ENCODE measurements at regions of chr20 and their contacts with region 1.

Region 1: DNA sequence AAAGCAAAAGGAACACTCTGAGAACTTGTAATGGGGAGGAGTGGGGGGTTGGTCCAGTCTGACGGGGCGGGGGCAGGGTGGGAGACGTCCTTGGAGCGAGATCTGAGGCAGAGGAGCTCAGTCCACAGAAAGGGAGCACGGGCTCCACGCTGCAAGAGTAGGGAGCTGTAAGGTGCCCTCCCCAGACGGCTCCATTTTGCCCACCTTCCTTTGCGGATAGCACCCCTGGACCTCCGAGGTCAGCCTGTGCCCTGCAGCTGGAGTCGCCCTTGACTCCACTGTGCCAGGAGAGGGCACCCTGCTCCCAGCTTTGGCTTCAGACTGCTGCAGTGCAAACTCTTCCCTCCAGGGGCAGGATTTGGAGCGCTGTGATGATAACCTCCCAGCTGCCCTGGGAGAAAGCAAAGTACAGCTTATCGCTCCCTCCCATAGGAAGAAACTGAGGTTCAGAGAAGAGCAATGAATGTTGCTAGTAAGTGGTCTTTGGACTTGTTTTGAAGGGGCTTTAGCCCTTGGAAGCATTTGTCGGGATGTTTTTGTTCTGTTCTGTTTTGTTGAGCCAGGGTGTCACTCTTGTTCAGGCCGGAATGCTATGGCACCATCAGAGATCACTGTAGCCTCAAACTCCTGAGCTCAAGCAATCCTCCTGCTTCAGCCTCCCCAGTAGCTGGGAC is 9.5 kb upstream of the AHCY start:
- DNase-seq: peak; percentile 88
- CTCF ChIP-seq: peak; percentile 100

Region 2: GRCh38 chr20:34089655-34090345 is 222.9 kb before region 1 on chr20:
- CTCF ChIA-PET with region 1: no interaction called
- POLR2A ChIA-PET with region 1: no interaction called
- DNase-seq: no peak
- CTCF ChIP-seq: no peak

Region 3: DNA sequence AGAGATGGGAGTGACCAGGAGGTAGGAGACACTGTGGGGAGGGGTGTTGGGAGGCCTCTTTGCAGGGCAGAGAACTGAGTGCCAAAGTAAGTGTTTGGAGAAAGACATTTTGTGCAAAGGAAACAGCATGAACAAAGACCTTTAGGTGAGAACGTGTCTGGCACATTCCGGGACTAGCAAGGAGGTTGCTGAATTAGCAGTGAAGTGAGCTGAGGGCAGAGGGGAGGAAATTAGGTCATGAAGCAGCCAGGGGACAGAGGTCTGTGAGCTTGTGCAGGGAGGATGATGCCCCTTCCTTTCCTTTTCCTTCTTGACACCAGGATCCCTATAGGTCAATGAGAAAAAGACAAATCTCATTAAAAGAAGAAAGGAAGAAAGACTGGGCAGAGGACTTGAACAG is 11.9 kb after region 1 on chr20:
- CTCF ChIA-PET with region 1: interaction called, 36 read pairs
- POLR2A ChIA-PET with region 1: no interaction called
- DNase-seq: no peak
- CTCF ChIP-seq: no peak

Region 4: GRCh38 chr20:34437330-34437986 is 124.8 kb after region 1 on chr20:
- CTCF ChIA-PET with region 1: interaction called, 12 read pairs
- POLR2A ChIA-PET with region 1: no interaction called
- DNase-seq: no peak
- CTCF ChIP-seq: no peak

Region 5: GRCh38 chr20:34516247-34517113 is 203.8 kb after region 1 on chr20 and contains the start of gene DYNLRB1:
- CTCF ChIA-PET with region 1: interaction called, 81 read pairs
- POLR2A ChIA-PET with region 1: no interaction called
- DNase-seq: peak; percentile 92
- CTCF ChIP-seq: no peak

Region 6: DNA sequence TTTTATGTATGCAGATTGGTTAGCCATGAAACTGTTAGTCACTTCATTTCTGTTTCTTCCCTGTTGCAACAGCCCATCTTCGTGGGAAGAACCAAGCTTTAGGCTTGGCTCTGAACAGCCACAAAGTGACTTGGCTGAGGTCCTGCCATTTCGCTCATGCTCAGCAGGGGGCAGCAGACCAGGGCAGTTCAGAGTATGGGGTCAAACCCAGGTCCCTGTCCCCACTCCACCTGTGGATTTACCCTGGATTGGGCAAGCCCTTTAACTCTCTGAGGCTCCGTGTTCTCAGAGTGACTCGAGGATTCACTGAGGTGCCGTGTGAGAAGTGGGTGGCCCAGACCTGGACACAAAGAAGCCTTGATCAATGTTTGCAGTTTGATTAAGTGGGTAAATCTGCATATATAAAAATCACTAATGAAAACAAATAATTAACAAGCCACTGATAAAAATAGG is 226.0 kb after region 1 on chr20:
- CTCF ChIA-PET with region 1: interaction called, 29 read pairs
- POLR2A ChIA-PET with region 1: no interaction called
- DNase-seq: peak; percentile 71
- CTCF ChIP-seq: peak; percentile 65

Region 7: DNA sequence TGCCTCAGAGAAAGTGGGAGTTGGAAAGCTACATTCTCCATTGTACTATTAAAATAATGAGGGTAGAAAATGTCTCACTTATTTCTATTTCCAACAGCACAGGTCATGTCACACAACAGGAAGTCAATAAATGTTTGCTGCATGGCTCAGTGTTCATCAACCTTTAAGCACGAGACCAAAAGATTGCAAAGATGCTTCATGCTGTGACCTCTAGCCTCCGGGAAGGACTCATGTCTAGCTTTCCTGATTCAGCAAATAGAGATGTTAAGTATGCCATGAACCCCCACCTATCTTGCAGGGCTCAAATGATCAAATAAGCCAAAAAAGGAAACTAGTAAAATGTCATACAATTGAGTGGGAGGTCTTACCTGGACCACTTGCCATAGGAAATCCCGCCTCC is 455.4 kb after region 1 on chr20:
- CTCF ChIA-PET with region 1: interaction called, 94 read pairs
- POLR2A ChIA-PET with region 1: no interaction called
- DNase-seq: no peak
- CTCF ChIP-seq: no peak

Measured in GM10248 (cell line).